ENCODE measurements at regions of chr7 and their contacts with region 1.

Region 1: GRCh38 chr7:98841179-98841997 is 28.4 kb downstream of the TMEM130 start:
- DNase-seq: peak; percentile 87
- ATAC-seq: peak; percentile 63
- H3K4me3 Mint-ChIP-seq: no peak overlapping the region
- H3K27ac Mint-ChIP-seq: no peak overlapping the region
- H3K4me1 Mint-ChIP-seq: peaks cover 8% of the 10 kb centered on the region
- H3K27me3 Mint-ChIP-seq: no peaks in the 10 kb centered on the region
- CTCF ChIP-seq: peak; percentile 99

Region 2: DNA sequence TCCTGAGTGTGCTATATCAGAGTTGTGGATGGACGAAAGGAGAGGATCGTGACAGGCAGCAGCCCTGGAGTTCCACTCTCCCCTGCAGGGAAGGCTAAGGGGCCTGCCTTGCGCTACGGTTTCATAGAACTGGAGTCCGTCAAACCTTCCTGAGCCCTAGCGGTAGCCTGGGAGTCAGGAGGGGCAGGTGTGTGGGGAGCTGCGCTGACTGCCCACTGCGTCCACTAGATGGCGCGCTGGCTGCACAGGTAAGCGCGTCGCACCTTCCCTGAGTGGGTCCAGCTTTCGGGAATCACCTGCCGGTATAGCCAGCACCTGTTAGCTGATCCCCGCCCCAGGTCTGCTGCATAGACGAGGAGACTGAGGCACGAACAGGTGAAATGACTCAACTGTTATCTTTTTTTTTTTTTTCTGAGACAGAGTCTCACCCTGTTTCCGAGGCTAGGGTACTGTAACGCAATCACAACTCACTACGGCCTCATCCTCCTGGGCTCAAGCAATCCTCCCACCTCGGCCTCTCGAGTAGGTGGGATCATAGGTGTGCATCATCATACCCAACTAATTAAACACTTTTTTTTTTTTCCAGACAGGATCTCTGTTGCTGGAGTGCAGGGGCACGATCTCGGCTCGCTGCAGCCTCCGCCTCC is 420.3 kb before region 1 on chr7:
- CTCF ChIA-PET with region 1: interaction called, 12 read pairs
- POLR2A ChIA-PET with region 1: no interaction called
- DNase-seq: peak; percentile 93
- ATAC-seq: peak; percentile 99
- H3K4me3 Mint-ChIP-seq: no peak overlapping the region
- H3K27ac Mint-ChIP-seq: no peak overlapping the region
- H3K4me1 Mint-ChIP-seq: no peaks in the 10 kb centered on the region
- H3K27me3 Mint-ChIP-seq: peaks cover 13% of the 10 kb centered on the region
- CTCF ChIP-seq: peak; percentile 92

Region 3: GRCh38 chr7:98745722-98746318 is 95.6 kb before region 1 on chr7:
- CTCF ChIA-PET with region 1: interaction called, 21 read pairs
- POLR2A ChIA-PET with region 1: no interaction called
- DNase-seq: peak; percentile 91
- ATAC-seq: peak; percentile 80
- H3K4me3 Mint-ChIP-seq: no peak overlapping the region
- H3K27ac Mint-ChIP-seq: no peak overlapping the region
- H3K4me1 Mint-ChIP-seq: no peaks in the 10 kb centered on the region
- H3K27me3 Mint-ChIP-seq: no peaks in the 10 kb centered on the region; the same call in 1 of the 2 replicates
- CTCF ChIP-seq: peak; percentile 93

Region 4: GRCh38 chr7:98771519-98771918 is 69.9 kb before region 1 on chr7:
- CTCF ChIA-PET with region 1: interaction called, 11 read pairs
- POLR2A ChIA-PET with region 1: no interaction called
- DNase-seq: peak; percentile 25
- ATAC-seq: peak; percentile 71
- H3K4me3 Mint-ChIP-seq: peak overlapping the region; percentile 60
- H3K27ac Mint-ChIP-seq: peak overlapping the region; percentile 76
- H3K4me1 Mint-ChIP-seq: peaks cover 38% of the 10 kb centered on the region
- H3K27me3 Mint-ChIP-seq: peaks cover 8% of the 10 kb centered on the region
- CTCF ChIP-seq: no peak